ENCODE measurements at regions of chr7 and their contacts with region 1.

Region 1: DNA sequence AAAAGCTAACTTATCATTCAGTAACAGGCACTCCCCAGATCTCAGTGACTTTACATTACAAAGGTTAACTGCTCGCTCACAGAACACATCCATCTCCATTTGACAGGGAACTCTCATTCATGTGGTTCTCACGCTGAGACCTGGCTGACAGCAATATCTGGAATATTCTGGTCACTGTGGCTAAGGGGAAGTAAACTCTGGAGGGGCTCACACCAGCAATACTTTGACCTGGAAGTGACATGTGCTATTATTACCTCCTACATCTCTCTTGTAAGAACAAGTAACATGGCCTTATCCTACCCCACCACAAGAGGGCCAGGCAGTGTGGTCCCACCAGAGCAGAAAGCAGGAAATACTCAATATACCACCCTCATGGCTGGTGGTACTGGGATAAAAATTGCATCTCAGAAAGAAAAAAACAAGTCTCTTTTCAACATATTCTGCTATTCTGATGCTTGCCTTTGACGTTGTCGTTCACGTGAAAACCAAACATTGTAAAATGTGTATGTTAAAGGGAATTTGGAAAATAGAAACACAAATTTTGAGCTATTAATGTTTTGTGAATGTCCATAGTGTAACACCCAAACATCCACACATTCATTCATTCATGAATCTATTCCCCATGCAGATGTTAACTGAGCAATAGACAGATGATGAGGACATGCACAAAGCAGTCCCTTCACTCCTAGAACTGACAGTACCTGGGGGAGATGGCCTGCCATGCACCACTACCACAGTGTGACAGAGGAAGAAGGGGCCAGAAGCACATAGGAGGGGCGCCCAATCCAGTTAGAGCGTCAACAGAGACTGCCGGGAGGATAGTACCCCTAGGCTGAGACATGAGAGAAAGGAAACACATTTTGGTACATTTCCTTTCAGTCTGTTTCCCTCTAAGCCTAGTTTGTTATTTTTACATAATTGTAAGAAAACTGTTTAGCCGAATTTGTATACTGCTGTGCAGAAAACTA is 166.0 kb upstream of the SP4 start:
- DNase-seq: peak; percentile 69 to 72
- H3K4me3 ChIP-seq: no peak overlapping the region
- H3K4me1 ChIP-seq: peaks cover 2% of the 10 kb centered on the region; the same call in 1 of the 2 replicates
- H3K27me3 ChIP-seq: no peaks in the 10 kb centered on the region

Region 2: DNA sequence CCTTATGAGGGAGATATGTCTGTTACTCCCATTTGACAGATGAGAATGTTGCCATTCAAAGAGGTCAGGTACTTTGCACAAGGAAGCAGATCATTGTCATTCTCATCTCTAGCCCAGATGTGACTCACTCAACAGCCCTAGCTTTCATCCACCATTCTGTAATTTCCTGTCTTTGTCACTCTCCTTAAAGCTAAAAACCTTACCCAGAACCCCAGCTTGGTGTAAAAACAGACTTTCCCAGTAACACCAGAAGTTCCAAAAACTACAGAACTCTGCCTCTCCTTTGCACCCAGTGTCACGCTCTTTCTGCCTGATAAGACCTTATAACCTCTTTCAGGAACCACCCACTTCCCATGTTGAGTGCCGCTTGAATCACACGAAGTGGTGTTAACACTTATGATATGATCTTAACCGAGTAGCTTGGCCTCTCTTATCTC is 76.8 kb after region 1 on chr7:
- in situ Hi-C with region 1: no loop called
- DNase-seq: no peak
- H3K4me3 ChIP-seq: no peak overlapping the region
- H3K4me1 ChIP-seq: no peaks in the 10 kb centered on the region
- H3K27me3 ChIP-seq: no peaks in the 10 kb centered on the region

Region 3: DNA sequence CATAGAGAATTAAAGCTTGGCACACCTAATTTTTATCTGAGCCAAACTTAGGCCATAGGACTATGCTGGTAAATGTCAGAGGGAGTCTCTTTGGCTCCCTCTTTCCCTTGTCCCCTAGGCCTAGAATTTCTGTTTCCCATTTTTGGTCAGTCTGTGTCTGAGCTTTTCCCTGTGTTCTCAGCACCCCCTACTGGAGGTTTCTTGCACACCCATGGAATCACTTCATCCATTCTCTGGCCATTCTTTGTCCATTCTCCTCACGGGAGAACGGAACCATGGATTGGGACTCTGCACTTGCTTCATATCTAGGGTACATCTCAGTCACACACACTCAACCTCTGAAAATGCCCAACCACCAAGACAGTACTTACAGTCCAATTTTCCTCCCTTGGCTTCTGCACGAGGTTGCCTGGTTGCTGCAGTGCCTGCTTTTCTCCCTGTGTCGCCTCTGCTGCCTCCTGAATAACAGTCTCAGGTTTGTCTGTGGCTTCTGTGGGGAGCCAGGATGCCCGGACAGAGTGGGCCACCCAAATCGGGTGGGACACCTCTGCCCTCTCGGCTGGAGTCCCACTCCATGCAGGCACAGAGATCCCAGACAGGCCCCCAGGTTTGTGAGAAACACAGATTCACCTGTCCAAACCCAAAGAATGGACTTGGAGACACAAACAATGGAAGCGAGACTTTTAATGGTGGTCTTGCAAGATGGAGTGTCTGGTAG is 245.9 kb after region 1 on chr7:
- in situ Hi-C with region 1: loop called (anchors 25 kb)
- DNase-seq: peak; percentile 13 to 71
- H3K4me3 ChIP-seq: no peak overlapping the region
- H3K4me1 ChIP-seq: no peaks in the 10 kb centered on the region
- H3K27me3 ChIP-seq: no peaks in the 10 kb centered on the region

Region 4: GRCh38 chr7:21767300-21767900 is 505.5 kb after region 1 on chr7:
- in situ Hi-C with region 1: loop called (anchors 25 kb)
- DNase-seq: peak; percentile 78 to 85
- H3K4me3 ChIP-seq: no peak overlapping the region
- H3K4me1 ChIP-seq: peaks cover 5% of the 10 kb centered on the region
- H3K27me3 ChIP-seq: peaks cover 2% of the 10 kb centered on the region; the same call in 1 of the 2 replicates

Region 5: GRCh38 chr7:22001345-22002004 is 739.6 kb after region 1 on chr7:
- in situ Hi-C with region 1: loop called (anchors 25 kb)
- DNase-seq: peak; percentile 57 to 73
- H3K4me3 ChIP-seq: no peak overlapping the region
- H3K4me1 ChIP-seq: no peaks in the 10 kb centered on the region
- H3K27me3 ChIP-seq: peaks cover 5% of the 10 kb centered on the region; the same call in 1 of the 2 replicates

Region 6: DNA sequence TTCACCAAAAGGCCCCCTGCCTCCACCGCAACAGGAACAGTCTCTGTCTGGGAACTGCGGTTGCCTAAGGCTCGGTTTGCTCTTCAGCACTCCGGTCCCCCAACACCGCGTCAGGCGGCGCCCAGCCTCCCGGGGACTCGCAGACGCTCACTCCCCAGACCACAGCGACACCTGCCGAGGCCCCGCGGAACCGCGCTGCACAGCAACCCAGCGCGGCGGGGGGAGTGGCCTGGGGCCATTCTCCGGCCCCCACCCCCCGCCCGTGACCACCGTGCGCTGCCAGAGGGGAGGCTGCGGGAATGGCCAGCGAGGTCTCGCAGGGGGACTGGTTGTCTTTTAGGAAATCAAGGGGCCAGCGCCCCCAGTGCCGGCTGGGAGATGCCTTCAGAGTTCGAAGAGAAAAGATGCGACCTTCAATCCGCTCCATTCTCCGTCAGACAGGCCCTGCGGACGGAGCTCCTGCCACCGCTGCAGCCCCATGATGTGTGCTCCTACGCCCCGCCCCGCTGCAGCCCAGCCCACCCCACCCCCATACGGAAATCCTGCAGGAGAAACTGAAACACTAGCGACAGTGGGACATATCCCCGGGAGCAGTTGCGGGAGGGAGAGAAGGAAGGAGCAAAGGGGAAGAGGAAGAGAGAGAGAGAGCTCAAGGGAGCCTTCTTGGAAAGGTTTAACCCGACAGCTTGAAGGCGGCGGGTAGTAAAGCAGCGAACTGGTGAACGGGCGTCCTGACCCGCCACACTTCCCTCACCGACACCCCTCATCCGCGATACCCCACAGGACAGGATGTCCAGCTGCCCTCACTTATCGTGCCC is 821.2 kb after region 1 on chr7:
- in situ Hi-C with region 1: loop called (anchors 10 kb)
- DNase-seq: peak; percentile 74 to 97
- H3K4me3 ChIP-seq: peak overlapping the region; percentile 55
- H3K4me1 ChIP-seq: peaks cover 3% of the 10 kb centered on the region
- H3K27me3 ChIP-seq: no peaks in the 10 kb centered on the region

Measured in HAP-1 (cell line).